A673 (cell line): ENCODE measurements at regions of chr2 and their contacts with region 1.

Region 1: DNA sequence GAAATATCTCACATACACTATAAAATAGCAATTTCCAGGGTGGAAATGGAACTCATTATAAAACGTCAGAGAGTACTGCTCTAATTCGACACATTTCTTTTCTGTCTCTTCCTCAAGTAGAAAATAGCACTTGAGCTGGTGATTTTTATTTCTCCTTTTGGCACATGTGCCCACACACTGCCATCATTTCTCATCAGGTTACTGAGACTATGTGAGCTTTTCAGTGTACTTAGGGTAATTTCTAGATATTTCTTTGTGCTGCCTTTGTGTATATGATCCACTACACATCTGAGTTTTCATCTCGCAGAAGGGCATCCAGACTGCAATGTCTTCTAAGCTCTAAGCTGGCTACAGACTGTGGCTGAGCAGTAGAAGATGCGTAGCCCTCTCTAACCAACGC is 62.1 kb upstream of the PGAP1 start:
- DNase-seq: peak; percentile 35
- H3K4me3 ChIP-seq: peak overlapping the region; percentile 1
- H3K27ac ChIP-seq: peak overlapping the region; percentile 95
- H3K4me1 ChIP-seq: peaks cover 48% of the 10 kb centered on the region
- H3K27me3 ChIP-seq: no peaks in the 10 kb centered on the region
- CTCF ChIP-seq: no peak

Region 2: DNA sequence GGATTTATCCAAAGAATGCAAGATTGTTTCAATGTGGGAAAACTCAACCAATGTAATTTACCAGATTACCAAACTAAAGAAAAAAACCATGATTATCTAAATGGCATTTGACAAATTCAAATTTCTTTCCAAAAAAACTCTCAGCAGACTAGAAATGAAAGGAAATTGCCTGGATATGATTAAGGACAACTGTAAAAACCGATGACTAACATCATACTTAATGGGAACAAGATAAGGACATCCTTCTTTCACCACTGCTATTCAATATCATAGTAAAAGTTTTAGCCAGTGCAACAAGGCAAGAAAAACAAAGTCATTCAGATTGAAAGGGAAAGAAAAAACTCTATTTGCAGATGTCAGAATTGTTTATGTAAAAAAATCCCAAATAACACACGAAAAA is 353.5 kb before region 1 on chr2:
- CTCF ChIA-PET with region 1: no interaction called
- POLR2A ChIA-PET with region 1: no interaction called
- intact Hi-C with region 1: no loop called
- DNase-seq: no peak
- H3K4me3 ChIP-seq: no peak overlapping the region
- H3K27ac ChIP-seq: no peak overlapping the region
- H3K4me1 ChIP-seq: no peaks in the 10 kb centered on the region
- H3K27me3 ChIP-seq: no peaks in the 10 kb centered on the region
- CTCF ChIP-seq: no peak

Region 3: DNA sequence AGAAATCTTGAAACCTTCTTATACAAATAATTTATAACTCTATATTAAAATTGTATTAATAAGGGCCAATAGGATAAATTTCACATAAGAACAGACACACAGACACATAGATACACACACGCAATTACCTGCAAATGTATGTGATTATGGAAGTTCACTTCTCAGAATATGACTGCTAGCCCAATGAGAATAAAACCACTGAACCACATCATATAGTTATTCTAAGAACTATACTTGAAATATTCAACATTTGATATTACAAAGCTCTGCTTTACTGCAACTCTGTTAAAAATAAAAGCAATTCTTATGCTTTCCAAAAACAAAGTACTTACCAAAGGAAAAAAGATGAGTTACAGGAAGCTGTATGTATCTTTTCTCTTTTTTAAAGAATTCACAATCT is 113.2 kb before region 1 on chr2:
- CTCF ChIA-PET with region 1: no interaction called
- POLR2A ChIA-PET with region 1: no interaction called
- intact Hi-C with region 1: no loop called
- DNase-seq: no peak
- H3K4me3 ChIP-seq: no peak overlapping the region
- H3K27ac ChIP-seq: no peak overlapping the region
- H3K4me1 ChIP-seq: no peaks in the 10 kb centered on the region
- H3K27me3 ChIP-seq: no peaks in the 10 kb centered on the region
- CTCF ChIP-seq: no peak

Region 4: DNA sequence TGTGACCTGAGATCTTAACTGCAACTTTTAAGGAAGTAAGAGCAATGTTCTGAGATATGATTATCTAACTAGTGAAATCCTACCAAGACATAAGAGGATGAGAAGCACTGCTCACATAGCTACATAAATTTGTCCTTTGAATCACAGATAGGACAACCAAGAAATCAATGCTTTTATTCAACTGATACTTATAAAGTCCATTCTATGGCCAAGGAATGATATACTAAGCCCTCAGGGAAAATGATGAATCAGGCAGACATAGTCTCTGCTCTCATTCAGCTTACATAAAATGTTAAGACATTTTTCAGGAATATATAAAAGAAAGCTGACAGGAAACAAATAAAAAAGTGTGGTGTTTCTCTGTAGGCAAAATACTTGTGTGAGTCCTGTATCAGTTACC is 101.2 kb before region 1 on chr2:
- CTCF ChIA-PET with region 1: no interaction called
- POLR2A ChIA-PET with region 1: interaction called, 12 read pairs
- intact Hi-C with region 1: no loop called
- DNase-seq: no peak
- H3K4me3 ChIP-seq: no peak overlapping the region
- H3K27ac ChIP-seq: no peak overlapping the region
- H3K4me1 ChIP-seq: no peaks in the 10 kb centered on the region
- H3K27me3 ChIP-seq: no peaks in the 10 kb centered on the region
- CTCF ChIP-seq: no peak

Region 5: GRCh38 chr2:196961889-196962288 is 26.8 kb before region 1 on chr2:
- CTCF ChIA-PET with region 1: no interaction called
- POLR2A ChIA-PET with region 1: no interaction called
- intact Hi-C with region 1: no loop called
- DNase-seq: no peak
- H3K4me3 ChIP-seq: no peak overlapping the region
- H3K27ac ChIP-seq: no peak overlapping the region
- H3K4me1 ChIP-seq: peaks cover 19% of the 10 kb centered on the region
- H3K27me3 ChIP-seq: no peaks in the 10 kb centered on the region
- CTCF ChIP-seq: no peak